ENCODE measurements at regions of chr3 and their contacts with region 1.

Region 1: DNA sequence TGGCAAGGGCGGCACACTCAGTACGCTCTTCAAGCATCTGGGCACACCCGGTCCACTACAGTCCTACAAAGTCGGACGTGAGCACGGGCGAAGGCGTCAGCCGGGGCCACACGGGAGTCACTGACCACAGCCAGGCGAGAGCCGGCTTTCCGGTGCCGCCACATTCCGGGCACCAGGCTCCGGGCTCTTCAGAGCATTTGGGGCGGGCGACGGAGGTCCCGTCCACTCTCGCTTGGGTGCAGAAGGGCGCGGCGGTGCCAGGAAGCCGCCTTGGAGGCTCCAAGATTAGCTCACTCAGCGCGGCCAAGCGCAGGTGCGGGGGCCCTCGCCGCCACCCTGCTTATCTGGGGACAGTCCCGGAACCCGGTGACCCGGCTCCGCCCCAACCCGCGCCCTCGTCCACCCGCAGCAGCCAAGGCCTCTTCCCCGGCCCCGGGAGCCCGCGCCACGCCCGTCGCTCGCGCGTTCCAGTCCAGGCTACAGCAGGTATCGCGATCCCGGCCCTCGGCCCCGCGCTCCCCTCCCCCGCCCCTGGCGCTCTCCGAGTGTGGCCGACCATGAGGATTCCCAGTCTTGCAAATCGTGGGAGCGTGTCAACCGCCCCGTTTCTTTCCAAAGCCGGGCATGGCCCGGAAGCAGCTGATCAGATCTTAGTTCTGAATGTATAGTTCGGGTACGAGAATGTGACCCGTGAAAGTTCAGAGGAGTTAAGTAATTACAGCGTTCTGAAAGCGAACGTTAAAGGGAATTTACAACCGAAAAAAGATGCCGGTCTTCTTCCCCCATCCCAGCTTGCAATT is at the start of gene ADPRH:
- DNase-seq: peak; percentile 74 to 88
- ATAC-seq: peak; percentile 87 to 88
- H3K4me3 ChIP-seq: peak within 1 kb of the TSS; percentile 66 to 75 (median 71)
- H3K27ac ChIP-seq: peak within 1 kb of the TSS; percentile 92 to 97 (median 94)
- H3K4me1 ChIP-seq: peaks cover 8 to 13% of the 10 kb centered on the region in 2 donors
- H3K27me3 ChIP-seq: no peaks in the 10 kb centered on the region
- CTCF ChIP-seq: no peak
- POLR2A ChIP-seq: peak; percentile 57 to 76
- total RNA-seq, gene ADPRH: 8.2 to 15.3 (median 10.3) TPM

Region 2: DNA sequence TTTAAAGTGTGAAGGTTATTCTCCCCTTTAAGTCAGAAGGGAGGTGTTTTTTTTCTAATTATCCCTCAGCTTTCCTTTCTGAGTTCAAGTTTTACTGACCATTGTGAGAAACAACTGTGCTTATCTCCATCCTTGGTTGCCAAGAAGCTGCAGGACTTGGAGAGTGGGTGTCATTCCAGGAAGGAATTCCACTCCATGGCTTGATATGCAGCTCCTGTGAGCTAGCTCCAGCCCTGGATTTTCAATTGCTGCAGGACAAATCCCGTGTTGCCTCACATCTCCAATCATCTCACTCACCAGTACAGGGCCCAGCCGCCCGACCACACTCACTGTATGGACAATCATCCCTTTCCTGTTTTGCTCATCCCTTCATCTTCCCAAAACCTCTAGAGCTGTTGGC is 667.4 kb before region 1 on chr3:
- in situ Hi-C with region 1: no loop called
- intact Hi-C with region 1: no loop called
- DNase-seq: no peak
- ATAC-seq: no peak
- H3K4me3 ChIP-seq: no peak overlapping the region
- H3K27ac ChIP-seq: no peak overlapping the region
- H3K4me1 ChIP-seq: no peaks in the 10 kb centered on the region
- H3K27me3 ChIP-seq: no peaks in the 10 kb centered on the region
- CTCF ChIP-seq: no peak
- POLR2A ChIP-seq: no peak

Region 3: GRCh38 chr3:119498186-119498987 is 81.2 kb before region 1 on chr3 and contains the start of gene TIMMDC1:
- in situ Hi-C with region 1: no loop called
- intact Hi-C with region 1: loop called (anchors 5 kb)
- DNase-seq: peak; percentile 96 to 98
- ATAC-seq: peak; percentile 96 to 98
- H3K4me3 ChIP-seq: peak within 1 kb of the TSS; percentile 71 to 93 (median 90)
- H3K27ac ChIP-seq: peak within 1 kb of the TSS; percentile 91 to 98 (median 94)
- H3K4me1 ChIP-seq: peaks cover 29 to 33% of the 10 kb centered on the region in 2 donors
- H3K27me3 ChIP-seq: no peaks in the 10 kb centered on the region
- CTCF ChIP-seq: no peak
- POLR2A ChIP-seq: peak; percentile 72 to 86
- total RNA-seq, gene TIMMDC1: 41.2 to 137 (median 101) TPM

Region 4: DNA sequence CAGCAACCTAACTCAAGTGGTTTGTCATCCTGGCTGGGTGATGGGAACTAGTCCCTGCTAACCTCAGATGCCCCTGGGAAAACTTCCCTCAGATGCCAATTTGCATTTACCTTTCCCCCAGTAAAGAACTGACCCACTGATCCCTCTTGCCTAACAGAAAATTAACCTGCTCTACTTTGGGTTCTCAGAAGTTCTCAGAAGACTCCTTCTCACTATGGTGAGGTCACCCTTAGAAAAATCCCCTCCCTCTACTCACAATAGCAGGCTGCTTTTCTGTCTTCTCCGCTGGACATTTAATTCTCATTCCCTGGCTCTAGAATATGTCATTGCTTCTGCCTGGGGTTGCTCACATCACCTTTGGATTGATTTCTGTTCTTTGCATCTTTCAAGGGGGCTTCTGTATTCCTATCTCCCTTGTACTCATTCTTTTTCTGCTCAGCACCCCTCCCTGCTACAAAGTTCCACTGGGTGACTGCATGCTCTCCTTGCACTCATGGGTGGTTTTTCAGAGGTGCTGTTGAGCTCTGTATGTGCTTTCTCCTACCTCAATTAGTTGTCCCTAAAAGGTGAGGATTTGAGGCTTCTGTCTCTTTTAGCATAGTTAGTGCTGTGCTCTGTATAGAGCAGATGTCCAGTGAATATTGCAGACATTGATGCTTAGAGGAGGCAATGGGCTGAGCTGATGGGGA is 19.0 kb after region 1 on chr3:
- in situ Hi-C with region 1: no loop called
- intact Hi-C with region 1: loop called (anchors 2 kb)
- DNase-seq: no peak
- ATAC-seq: no peak
- H3K4me3 ChIP-seq: no peak overlapping the region
- H3K27ac ChIP-seq: peak overlapping the region; percentile 80 to 90 (median 87)
- H3K4me1 ChIP-seq: peaks cover 40 to 46% of the 10 kb centered on the region in 2 donors
- H3K27me3 ChIP-seq: no peaks in the 10 kb centered on the region
- CTCF ChIP-seq: no peak
- POLR2A ChIP-seq: no peak

Region 5: GRCh38 chr3:119630128-119630879 is 50.7 kb after region 1 on chr3:
- in situ Hi-C with region 1: no loop called
- intact Hi-C with region 1: loop called (anchors 2 kb)
- DNase-seq: peak; percentile 76 to 91
- ATAC-seq: peak; percentile 92 to 95
- H3K4me3 ChIP-seq: no peak overlapping the region
- H3K27ac ChIP-seq: peak overlapping the region; percentile 84 to 95 (median 90)
- H3K4me1 ChIP-seq: peaks cover 75% of the 10 kb centered on the region in 2 donors
- H3K27me3 ChIP-seq: no peaks in the 10 kb centered on the region
- CTCF ChIP-seq: peak in 1 of 5 experiments; percentile 8
- POLR2A ChIP-seq: no peak

Region 6: GRCh38 chr3:119662604-119663373 is 83.2 kb after region 1 on chr3:
- in situ Hi-C with region 1: loop called in 1 of 4 experiments (anchors 10 kb)
- intact Hi-C with region 1: no loop called
- DNase-seq: peak; percentile 68 to 83
- ATAC-seq: peak; percentile 75 to 77
- H3K4me3 ChIP-seq: no peak overlapping the region
- H3K27ac ChIP-seq: peak overlapping the region; percentile 94 to 96 (median 95)
- H3K4me1 ChIP-seq: peaks cover 50 to 60% of the 10 kb centered on the region in 2 donors
- H3K27me3 ChIP-seq: no peaks in the 10 kb centered on the region
- CTCF ChIP-seq: peak in 4 of 5 experiments; percentile 24 to 57 (median 28)
- POLR2A ChIP-seq: peak; percentile 63 to 84

Measured in gastrocnemius medialis (tissue), 4 donors.